Activated T-helper 2 cell treated with anti-CD3 and anti-CD28 coated beads, Interferon-gamma antibody, Interleukin-2, Interleukin-4, amounts not matched to agents 10 μg/mL and 5 μg/mL and 100 μg/mL, durations not matched to agents 14 hours and 24 hours and 36 hours (primary cell): ENCODE measurements at regions of chr3 and their contacts with region 1.

Region 1: GRCh38 chr3:194134757-194135528 is 1.0 kb upstream of the HES1 start:
- DNase-seq: peak; percentile 82
- H3K4me3 Mint-ChIP-seq: peak overlapping the region; percentile 82
- H3K27ac Mint-ChIP-seq: peak overlapping the region; percentile 83
- H3K4me1 Mint-ChIP-seq: peaks cover 50% of the 10 kb centered on the region
- H3K27me3 Mint-ChIP-seq: peaks cover 75% of the 10 kb centered on the region

Region 2: DNA sequence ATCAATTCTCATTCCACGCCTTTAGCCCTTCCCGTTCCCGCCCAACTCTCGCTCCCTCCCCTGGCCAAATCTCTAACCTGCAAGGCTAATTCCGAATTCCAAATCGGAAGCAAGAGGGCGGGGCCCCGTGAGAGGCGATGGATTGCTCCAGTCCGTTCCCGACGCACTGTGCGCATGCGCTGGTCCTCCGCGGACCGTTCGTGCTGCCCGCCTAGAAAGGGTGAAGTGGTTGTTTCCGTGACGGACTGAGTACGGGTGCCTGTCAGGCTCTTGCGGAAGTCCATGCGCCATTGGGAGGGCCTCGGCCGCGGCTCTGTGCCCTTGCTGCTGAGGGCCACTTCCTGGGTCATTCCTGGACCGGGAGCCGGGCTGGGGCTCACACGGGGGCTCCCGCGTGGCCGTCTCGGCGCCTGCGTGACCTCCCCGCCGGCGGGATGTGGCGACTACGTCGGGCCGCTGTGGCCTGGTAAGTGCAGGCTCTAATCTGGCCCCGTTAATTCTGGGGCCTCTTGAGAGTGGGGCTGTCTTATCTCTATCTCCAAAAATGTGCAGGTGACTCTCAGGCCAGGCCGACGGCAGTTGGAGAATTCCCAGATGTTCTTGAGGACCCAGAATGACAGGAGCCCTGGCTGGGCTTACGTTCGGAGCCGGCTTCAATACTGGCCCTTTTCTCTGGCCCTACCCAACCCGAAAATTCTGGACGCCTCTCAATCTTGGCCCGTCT is 541.8 kb before region 1 on chr3 and contains the start of gene OPA1:
- intact Hi-C with region 1: loop called (anchors 10 kb)
- DNase-seq: peak; percentile 90
- H3K4me3 Mint-ChIP-seq: peak within 1 kb of the TSS; percentile 99
- H3K27ac Mint-ChIP-seq: peak within 1 kb of the TSS; percentile 100
- H3K4me1 Mint-ChIP-seq: peaks cover 37% of the 10 kb centered on the region
- H3K27me3 Mint-ChIP-seq: no peaks in the 10 kb centered on the region
- total RNA-seq, gene OPA1: 105 and 118 TPM in 2 replicates

Region 3: GRCh38 chr3:193780810-193781472 is 354.0 kb before region 1 on chr3:
- intact Hi-C with region 1: loop called (anchors 5 kb)
- DNase-seq: no peak
- H3K4me3 Mint-ChIP-seq: no peak overlapping the region
- H3K27ac Mint-ChIP-seq: no peak overlapping the region
- H3K4me1 Mint-ChIP-seq: peaks cover 9% of the 10 kb centered on the region
- H3K27me3 Mint-ChIP-seq: peaks cover 55% of the 10 kb centered on the region

Region 4: DNA sequence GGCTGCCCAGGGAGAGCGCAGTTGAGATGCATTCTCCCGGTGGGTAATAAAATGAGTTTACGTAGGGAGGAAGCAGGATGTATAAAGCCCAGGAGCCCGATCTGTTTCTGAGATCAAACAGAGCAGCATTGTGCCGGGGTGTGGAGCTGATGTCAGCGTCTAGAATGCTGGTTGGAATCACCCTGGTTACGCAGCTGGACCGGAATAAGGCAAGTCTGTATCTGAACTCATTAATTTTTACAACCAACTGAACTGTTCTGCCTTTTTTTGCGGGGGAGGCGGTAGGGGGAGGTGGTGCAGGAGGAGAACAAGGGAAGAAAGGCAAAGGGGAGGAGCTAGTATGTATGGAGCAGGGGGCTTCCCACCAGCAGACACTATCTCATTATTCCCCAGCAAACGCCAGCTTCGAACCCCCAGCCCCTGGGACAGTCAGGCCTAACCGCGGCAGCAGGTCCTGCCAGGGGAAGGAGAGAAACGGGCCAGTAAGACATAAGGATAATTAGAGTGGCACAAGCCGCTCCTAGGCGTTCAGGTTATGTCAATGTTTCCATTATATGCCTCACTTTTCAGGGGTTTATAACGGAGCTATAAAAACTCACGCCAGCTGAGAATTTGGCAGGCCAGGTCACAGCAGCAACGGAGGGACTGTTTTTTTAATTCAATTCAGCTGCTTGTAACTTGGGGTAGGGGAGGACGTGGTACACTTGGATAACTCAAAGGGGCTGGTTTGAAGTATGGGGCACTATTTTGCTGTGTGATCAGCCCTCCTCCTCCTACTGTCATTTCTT is 174.3 kb before region 1 on chr3:
- intact Hi-C with region 1: loop called (anchors 1 kb)
- DNase-seq: no peak
- H3K4me3 Mint-ChIP-seq: no peak overlapping the region
- H3K27ac Mint-ChIP-seq: no peak overlapping the region
- H3K4me1 Mint-ChIP-seq: peaks cover 24% of the 10 kb centered on the region
- H3K27me3 Mint-ChIP-seq: peaks cover 58% of the 10 kb centered on the region

Region 5: DNA sequence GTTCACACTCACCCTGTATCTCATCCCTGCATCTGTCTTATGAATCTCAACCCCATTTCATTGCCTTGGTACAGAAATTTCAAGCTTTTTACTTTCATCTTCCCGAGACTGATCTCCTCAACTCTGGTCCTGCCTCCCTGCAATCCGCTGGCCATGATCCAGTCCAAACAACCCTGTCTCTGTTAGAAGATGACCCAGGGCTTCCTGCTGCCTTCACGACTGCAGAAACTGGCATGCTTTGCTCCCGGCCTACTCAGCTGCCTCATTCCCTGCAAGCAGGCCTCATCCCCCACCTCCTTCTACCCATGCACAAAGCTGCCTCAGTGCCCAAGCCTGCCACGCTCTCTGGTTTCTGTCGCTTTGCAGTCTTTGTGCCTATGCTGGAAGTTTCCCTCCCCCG is 13.4 kb after region 1 on chr3:
- intact Hi-C with region 1: no loop called
- DNase-seq: no peak
- H3K4me3 Mint-ChIP-seq: no peak overlapping the region
- H3K27ac Mint-ChIP-seq: no peak overlapping the region
- H3K4me1 Mint-ChIP-seq: no peaks in the 10 kb centered on the region
- H3K27me3 Mint-ChIP-seq: peaks cover 46% of the 10 kb centered on the region

Region 6: GRCh38 chr3:194204042-194204987 is 69.4 kb after region 1 on chr3:
- intact Hi-C with region 1: loop called (anchors 5 kb)
- DNase-seq: no peak
- H3K4me3 Mint-ChIP-seq: peak overlapping the region; percentile 67
- H3K27ac Mint-ChIP-seq: no peak overlapping the region
- H3K4me1 Mint-ChIP-seq: peaks cover 20% of the 10 kb centered on the region
- H3K27me3 Mint-ChIP-seq: peaks cover 36% of the 10 kb centered on the region

Region 7: GRCh38 chr3:194306109-194306686 is 171.3 kb after region 1 on chr3:
- intact Hi-C with region 1: loop called (anchors 2 kb)
- DNase-seq: peak; percentile 67
- H3K4me3 Mint-ChIP-seq: no peak overlapping the region
- H3K27ac Mint-ChIP-seq: peak overlapping the region; percentile 86
- H3K4me1 Mint-ChIP-seq: peaks cover 59% of the 10 kb centered on the region
- H3K27me3 Mint-ChIP-seq: peaks cover 3% of the 10 kb centered on the region

Region 8: DNA sequence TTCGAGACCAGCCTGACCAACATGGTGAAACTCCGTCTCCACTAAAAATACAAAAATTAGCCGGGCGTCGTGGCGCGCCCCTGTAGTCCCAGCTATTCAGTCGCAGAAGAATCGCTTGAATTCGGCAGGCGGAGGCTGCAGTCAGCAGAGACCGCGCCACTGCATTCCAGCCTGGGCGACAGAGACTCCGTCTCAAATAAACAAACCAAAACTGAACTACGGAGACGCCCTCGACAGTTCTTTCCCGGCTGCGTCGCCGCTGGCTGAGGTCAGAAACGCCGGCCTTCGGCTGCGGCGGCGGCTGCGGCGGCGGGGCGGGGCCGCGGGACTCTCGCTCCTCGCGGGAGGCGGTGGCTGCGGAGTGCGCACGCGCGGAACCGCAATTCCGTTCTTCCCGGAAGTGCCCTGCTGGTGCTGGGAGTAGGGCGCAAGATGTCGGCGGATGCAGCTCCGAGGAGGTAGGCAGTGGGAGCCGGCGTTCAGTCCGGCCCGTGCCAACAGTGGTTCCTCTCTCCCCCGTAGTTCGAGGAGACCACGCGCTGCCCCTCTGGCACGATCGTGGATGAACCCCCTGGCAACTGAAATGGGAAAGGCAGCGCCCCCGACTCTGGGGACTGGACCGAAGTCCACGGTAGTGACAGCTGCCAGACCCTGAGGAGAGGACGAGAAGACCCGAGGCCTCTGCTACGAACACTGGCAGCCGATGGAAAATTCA is 448.8 kb after region 1 on chr3:
- intact Hi-C with region 1: loop called (anchors 10 kb)
- DNase-seq: peak; percentile 95
- H3K4me3 Mint-ChIP-seq: peak overlapping the region; percentile 99
- H3K27ac Mint-ChIP-seq: peak overlapping the region; percentile 97
- H3K4me1 Mint-ChIP-seq: peaks cover 27% of the 10 kb centered on the region
- H3K27me3 Mint-ChIP-seq: no peaks in the 10 kb centered on the region